ENCODE measurements at regions of chr12 and their contacts with region 1.

Region 1: GRCh38 chr12:130871286-130872178 is at the start of gene RAN:
- DNase-seq: peak; percentile 93
- total RNA-seq, gene RAN: 344 TPM

Region 2: GRCh38 chr12:130818635-130819576 is 52.6 kb before region 1 on chr12:
- intact Hi-C with region 1: no loop called
- DNase-seq: peak; percentile 84

Region 3: DNA sequence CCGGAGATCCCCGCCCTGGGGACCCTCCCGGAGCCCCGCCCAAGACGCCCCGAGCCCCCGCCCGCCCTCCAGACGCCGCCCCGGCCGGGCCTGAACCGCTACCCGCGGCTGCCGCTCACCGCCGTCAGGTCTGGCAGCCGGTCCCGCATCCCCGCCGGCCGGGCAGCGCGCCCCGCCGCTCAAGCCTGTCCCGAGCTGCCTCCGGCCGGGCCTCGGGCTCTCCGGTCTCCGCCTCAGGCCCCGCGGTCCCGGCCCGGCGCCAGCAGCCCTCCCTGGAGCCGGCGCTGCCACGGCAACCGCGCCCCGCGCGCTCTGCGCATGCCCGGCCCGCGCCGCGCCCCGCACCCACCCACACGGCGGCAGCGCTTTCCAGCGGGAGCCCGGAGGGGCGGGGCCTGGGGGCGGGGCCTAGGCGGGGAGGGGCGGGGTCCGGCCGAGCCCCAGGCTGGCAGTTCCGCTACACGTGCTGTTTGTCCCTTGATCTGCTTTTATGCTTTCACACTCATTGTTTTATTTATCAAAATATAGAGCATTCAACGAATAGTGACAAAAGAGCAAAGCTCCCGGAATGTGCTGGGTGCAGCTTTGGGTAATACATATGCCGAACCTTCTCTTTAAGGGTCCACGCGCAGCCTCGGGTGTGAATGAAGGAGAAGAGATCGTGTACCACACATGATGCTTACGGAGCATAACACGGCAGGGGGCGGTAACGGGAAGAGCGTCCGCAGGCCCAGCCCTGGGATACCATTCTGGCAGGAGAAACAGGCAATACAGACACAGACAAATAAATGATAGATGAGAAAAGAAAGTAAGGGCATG is 32.4 kb before region 1 on chr12 and contains the start of gene STX2:
- intact Hi-C with region 1: loop called (anchors 1 kb)
- DNase-seq: peak; percentile 94
- total RNA-seq, gene STX2: 19.6 TPM

Region 4: DNA sequence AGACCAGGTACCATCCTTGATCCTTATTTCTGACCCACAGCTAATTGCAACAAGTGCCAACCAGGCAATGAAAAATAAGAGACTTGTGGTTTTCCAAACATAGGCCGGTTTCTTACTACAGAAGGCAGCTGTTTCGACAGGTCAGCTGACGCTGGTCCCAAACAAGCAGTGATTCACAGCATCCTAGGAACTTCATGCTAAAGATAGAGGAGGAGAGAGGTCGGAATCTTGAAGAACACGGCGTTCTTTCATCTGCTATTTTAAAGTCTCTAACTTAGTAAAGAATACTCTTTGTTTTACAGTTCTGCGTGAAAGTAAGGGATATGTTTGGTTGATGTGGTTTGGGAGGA is 54.1 kb after region 1 on chr12:
- intact Hi-C with region 1: no loop called
- DNase-seq: no peak